HCT116 (cell line): ENCODE measurements at regions of chr19 and their contacts with region 1.

Region 1: DNA sequence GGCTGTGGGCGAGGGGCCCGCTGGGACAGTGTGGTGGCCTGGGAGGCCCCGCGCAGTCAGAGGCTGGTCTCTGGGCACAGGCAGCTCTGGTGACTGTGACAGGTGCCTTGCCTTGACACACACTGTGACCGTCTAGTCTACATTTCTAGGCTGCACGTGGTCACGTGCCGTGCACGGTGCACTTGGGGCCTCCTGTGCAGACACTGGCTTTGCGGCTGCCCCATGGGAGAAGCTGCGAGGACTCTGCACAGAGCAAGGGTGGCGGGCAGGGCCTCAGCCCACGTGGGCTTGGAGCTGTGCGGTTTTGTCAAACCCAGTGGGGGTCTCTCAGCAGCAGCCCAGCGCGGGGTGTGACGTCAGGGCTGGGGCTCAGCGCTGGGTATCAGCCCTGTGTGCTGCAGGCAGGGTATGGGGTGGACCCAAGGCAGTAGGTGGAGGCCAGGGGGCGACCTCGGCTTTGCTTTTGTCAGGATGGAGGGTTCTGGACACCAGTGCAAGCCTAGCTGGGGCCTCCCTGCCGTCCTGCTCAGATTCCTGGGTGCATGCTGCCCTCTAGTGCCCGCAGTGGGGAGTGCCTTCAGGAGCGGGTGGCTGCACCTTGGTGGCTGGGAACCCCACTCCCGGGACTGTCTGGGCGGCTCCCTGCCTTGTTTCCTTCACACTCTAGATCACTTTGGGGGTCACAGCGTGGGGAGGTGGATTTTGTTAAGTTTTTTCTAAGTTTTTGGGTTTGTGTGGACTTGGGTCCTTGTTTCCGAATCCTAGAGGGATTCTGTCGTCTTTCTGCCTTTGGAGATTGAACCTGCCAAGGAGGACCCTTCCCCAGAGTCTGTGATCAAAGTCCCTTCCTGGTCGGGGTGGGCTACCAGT is 62.6 kb downstream of the KDM4B start:
- DNase-seq: no peak
- ATAC-seq: peak; percentile 95
- H3K4me3 ChIP-seq: no peak overlapping the region
- H3K27ac ChIP-seq: peak overlapping the region; percentile 8; the same call in 1 of the 2 replicates
- H3K4me1 ChIP-seq: peaks cover 0 to 23% of the 10 kb centered on the region in 2 experiments; a peak in 3 of 4 replicates
- H3K27me3 ChIP-seq: no peaks in the 10 kb centered on the region
- CTCF ChIP-seq: peak; percentile 87 to 95 (median 91)
- POLR2A ChIP-seq: no peak
- RAD21 ChIP-seq: peak; percentile 96

Region 2: DNA sequence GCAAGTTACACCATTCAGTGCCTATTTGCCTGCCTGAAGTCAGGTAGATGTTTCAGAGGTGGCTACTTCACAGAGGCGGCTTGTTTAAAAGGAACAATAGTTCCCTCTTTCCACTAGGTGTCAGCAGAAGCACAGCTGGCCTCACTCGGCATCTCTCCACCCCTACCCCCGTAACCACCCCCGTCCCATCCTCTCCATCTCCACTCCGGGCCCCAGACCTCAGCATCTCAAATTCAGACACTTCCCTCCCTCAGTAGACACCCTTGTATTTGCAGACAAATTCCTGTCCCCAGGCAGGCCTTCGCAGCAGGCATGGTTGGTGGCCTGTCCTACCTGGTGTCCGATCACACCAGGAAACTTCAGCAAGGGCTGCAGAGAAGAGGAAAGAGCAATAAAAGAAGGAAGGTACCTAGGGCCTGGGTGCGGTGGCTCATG is 298.8 kb before region 1 on chr19:
- CTCF ChIA-PET with region 1: no interaction called
- POLR2A ChIA-PET with region 1: no interaction called
- RAD21 ChIA-PET with region 1: no interaction called
- intact Hi-C with region 1: loop called (anchors 5 kb)
- DNase-seq: peak; percentile 58
- ATAC-seq: peak; percentile 93
- H3K4me3 ChIP-seq: peak overlapping the region in 1 of 2 experiments; percentile 40; a peak in 2 of 4 replicates
- H3K27ac ChIP-seq: no peak overlapping the region
- H3K4me1 ChIP-seq: peaks cover 2 to 8% of the 10 kb centered on the region in 2 experiments; a peak in 2 of 4 replicates
- H3K27me3 ChIP-seq: no peaks in the 10 kb centered on the region
- CTCF ChIP-seq: peak; percentile 64 to 94 (median 75)
- POLR2A ChIP-seq: no peak
- RAD21 ChIP-seq: peak; percentile 93

Region 3: DNA sequence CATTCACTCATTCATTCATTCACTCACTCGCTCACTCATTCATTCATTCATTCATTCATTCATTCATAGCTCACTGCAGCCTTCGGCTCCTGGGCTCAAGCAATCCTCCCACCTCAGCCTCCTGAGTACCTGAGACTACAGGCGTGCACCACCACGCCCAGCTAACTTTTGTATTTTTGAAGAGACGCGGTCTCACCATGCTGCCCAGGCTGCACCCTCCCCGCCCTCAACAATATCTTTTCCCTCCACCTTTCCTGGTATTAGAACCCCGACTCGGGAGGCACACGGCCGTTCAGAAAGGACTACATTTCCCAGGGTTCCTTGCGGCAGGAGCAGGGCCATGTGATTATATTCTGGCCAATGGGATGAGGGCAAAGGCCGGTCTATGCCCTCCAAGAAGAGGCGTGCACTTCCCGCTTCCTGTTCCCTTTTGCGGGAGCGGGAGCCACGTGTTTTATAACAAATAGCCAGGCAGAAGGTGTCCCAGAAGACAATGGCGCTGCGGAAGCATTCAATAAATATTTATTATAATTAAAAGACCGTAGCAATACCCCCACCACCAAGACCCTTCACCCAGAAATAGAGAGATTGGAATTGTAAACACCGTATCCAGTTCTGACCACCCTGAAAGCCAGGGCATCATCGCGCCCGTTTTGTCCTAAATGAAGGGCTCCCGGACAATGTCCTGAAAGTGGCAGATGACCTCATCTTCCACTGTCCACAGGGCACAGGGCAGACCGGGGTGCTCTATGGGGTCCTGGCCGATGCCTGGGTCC is 215.9 kb before region 1 on chr19:
- CTCF ChIA-PET with region 1: interaction called, 117 read pairs
- POLR2A ChIA-PET with region 1: no interaction called
- RAD21 ChIA-PET with region 1: interaction called, 24 to 40 read pairs
- intact Hi-C with region 1: no loop called
- DNase-seq: peak; percentile 91
- ATAC-seq: peak; percentile 71
- H3K4me3 ChIP-seq: no peak overlapping the region
- H3K27ac ChIP-seq: peak overlapping the region; percentile 76
- H3K4me1 ChIP-seq: peaks cover 21 to 53% of the 10 kb centered on the region in 2 experiments
- H3K27me3 ChIP-seq: no peaks in the 10 kb centered on the region
- CTCF ChIP-seq: no peak
- POLR2A ChIP-seq: no peak
- RAD21 ChIP-seq: no peak

Region 4: DNA sequence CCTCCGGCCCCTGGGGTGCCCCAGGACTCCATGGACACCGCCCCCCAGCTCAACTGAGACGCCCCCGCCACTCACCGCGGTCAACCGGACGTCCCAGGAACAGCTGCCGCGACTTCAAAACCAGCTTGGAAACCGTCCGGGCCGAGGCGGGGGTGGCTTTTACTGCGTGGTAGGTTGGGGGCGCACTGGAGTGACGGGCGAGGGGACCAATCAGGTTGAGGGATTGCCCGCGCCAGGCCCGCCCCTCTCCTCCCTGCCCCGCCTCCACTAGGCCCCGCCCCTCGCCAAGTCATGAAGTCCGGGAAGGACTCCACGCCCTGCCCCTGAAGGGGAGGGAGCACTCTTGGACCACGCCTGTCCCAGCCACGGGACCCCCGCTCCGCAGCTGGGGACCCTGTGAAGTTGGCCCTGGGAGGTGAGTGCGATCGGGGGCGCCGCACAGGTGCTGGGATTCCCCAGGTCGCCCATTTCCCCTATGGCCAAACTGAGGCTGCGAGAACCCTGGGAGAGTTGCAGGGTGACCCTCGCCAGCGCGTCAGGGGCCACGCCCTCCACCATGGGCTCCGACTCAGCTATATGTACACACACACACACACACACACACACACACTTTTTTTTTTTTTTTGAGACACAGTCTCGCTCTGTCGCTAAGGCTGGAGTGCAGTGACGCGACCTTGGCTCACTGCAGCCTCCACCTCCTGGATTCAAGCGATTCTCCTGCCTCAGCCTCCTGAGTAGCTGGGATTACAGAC is 163.8 kb before region 1 on chr19 and contains the start of gene PLIN3:
- CTCF ChIA-PET with region 1: interaction called, 32 read pairs
- POLR2A ChIA-PET with region 1: no interaction called
- RAD21 ChIA-PET with region 1: interaction called in 1 of 2 experiments, 5 read pairs
- intact Hi-C with region 1: loop called (anchors 1 kb)
- DNase-seq: peak; percentile 88
- ATAC-seq: peak; percentile 72
- H3K4me3 ChIP-seq: peak within 1 kb of the TSS; percentile 94 to 96
- H3K27ac ChIP-seq: peak within 1 kb of the TSS; percentile 95
- H3K4me1 ChIP-seq: peaks cover 49 to 76% of the 10 kb centered on the region in 2 experiments
- H3K27me3 ChIP-seq: no peaks in the 10 kb centered on the region
- CTCF ChIP-seq: no peak
- POLR2A ChIP-seq: no peak
- RAD21 ChIP-seq: no peak
- total RNA-seq, gene PLIN3: 207 TPM

Region 5: GRCh38 chr19:4873930-4874329 is 157.5 kb before region 1 on chr19:
- CTCF ChIA-PET with region 1: interaction called, 32 read pairs
- POLR2A ChIA-PET with region 1: no interaction called
- RAD21 ChIA-PET with region 1: interaction called in 1 of 2 experiments, 5 read pairs
- intact Hi-C with region 1: loop called (anchors 1 kb)
- DNase-seq: no peak
- ATAC-seq: no peak
- H3K4me3 ChIP-seq: no peak overlapping the region
- H3K27ac ChIP-seq: no peak overlapping the region
- H3K4me1 ChIP-seq: peaks cover 30 to 48% of the 10 kb centered on the region in 2 experiments
- H3K27me3 ChIP-seq: no peaks in the 10 kb centered on the region
- CTCF ChIP-seq: no peak
- POLR2A ChIP-seq: no peak
- RAD21 ChIP-seq: no peak

Region 6: GRCh38 chr19:4909897-4910593 is 121.4 kb before region 1 on chr19:
- CTCF ChIA-PET with region 1: interaction called, 12 read pairs
- POLR2A ChIA-PET with region 1: no interaction called
- RAD21 ChIA-PET with region 1: no interaction called
- intact Hi-C with region 1: loop called (anchors 10 kb)
- DNase-seq: peak; percentile 68
- ATAC-seq: peak; percentile 74
- H3K4me3 ChIP-seq: peak overlapping the region; percentile 55 to 90
- H3K27ac ChIP-seq: peak overlapping the region; percentile 98
- H3K4me1 ChIP-seq: peaks cover 50 to 60% of the 10 kb centered on the region in 2 experiments
- H3K27me3 ChIP-seq: no peaks in the 10 kb centered on the region
- CTCF ChIP-seq: no peak
- POLR2A ChIP-seq: no peak
- RAD21 ChIP-seq: no peak

Region 7: GRCh38 chr19:5001615-5002014 is 29.9 kb before region 1 on chr19:
- CTCF ChIA-PET with region 1: interaction called, 23 read pairs
- POLR2A ChIA-PET with region 1: no interaction called
- RAD21 ChIA-PET with region 1: interaction called, 3 to 5 read pairs
- intact Hi-C with region 1: no loop called
- DNase-seq: peak; percentile 32
- ATAC-seq: peak; percentile 89
- H3K4me3 ChIP-seq: peak overlapping the region in 1 of 2 experiments; percentile 1; a peak in 1 of 4 replicates
- H3K27ac ChIP-seq: peak overlapping the region; percentile 64; the same call in 1 of the 2 replicates
- H3K4me1 ChIP-seq: peaks cover 12 to 20% of the 10 kb centered on the region in 2 experiments
- H3K27me3 ChIP-seq: no peaks in the 10 kb centered on the region
- CTCF ChIP-seq: peak; percentile 37 to 95 (median 90); a peak in 5 of 6 replicates
- POLR2A ChIP-seq: no peak
- RAD21 ChIP-seq: peak; percentile 54

Region 8: DNA sequence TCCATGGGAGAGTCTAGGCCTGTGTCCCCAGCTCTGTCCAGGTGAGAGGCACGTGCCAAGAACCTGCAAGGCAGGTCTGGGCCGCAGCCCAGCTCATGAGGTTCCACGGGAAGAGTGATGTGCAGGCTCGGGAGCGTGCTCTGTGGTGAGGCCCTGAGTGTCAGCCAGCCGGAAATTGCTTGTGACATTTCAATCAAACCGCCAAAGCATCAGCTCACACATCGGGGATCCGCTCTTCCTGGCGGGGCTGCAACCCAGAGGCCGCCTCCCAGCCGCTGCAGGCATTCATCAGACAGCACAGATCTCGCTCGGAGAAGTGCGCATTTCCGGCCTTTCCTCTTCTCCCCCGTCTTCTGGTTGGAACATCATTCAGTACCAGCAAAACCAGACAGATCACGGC is 46.7 kb after region 1 on chr19:
- CTCF ChIA-PET with region 1: no interaction called
- POLR2A ChIA-PET with region 1: no interaction called
- RAD21 ChIA-PET with region 1: no interaction called
- intact Hi-C with region 1: no loop called
- DNase-seq: no peak
- ATAC-seq: no peak
- H3K4me3 ChIP-seq: no peak overlapping the region
- H3K27ac ChIP-seq: no peak overlapping the region
- H3K4me1 ChIP-seq: no peaks in the 10 kb centered on the region
- H3K27me3 ChIP-seq: no peaks in the 10 kb centered on the region
- CTCF ChIP-seq: no peak
- POLR2A ChIP-seq: no peak
- RAD21 ChIP-seq: no peak